CD4-positive, alpha-beta memory T cell (primary cell): ENCODE measurements at regions of chr14 and their contacts with region 1.

Region 1: GRCh38 chr14:106044949-106045600 is 518.7 kb downstream of the TMEM121 start:
- DNase-seq: peak; percentile 66 to 80 (median 69)
- H3K4me3 ChIP-seq: no peak overlapping the region
- H3K4me3 Mint-ChIP-seq: no peak overlapping the region
- H3K27ac ChIP-seq: no peak overlapping the region
- H3K27ac Mint-ChIP-seq: peak overlapping the region in 1 of 7 donors; percentile 45
- H3K4me1 ChIP-seq: no peaks in the 10 kb centered on the region
- H3K4me1 Mint-ChIP-seq: peaks cover 0 to 3% (median under 1%) of the 10 kb centered on the region in 4 donors
- H3K27me3 ChIP-seq: no peaks in the 10 kb centered on the region
- H3K27me3 Mint-ChIP-seq: peaks cover 4 to 17% of the 10 kb centered on the region in 2 donors

Region 2: DNA sequence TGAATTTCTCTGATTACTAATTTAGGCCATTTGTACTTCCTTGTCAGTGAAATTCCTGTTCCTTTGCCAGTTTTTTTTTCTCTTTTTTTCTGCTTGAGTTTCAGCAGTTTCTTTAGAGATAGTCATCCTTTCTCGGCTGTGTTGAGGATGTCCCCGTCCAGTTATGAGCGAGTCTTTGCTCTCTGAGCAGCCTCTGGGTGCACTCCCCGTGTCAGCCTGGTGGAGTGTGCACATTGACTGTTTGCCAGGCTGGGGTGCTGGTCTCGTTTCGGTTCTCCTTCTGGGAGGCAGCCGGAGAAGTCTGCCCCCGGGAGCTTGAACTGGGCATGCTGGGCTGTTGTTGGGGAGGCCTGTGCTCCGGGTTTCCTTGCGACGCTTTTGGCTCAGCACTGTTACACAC is 727.5 kb before region 1 on chr14:
- CTCF ChIA-PET with region 1: no interaction called
- POLR2A ChIA-PET with region 1: no interaction called
- intact Hi-C with region 1: no loop called
- DNase-seq: no peak
- H3K4me3 ChIP-seq: no peak overlapping the region
- H3K4me3 Mint-ChIP-seq: peak overlapping the region in 1 of 8 donors; percentile 50
- H3K27ac ChIP-seq: no peak overlapping the region
- H3K27ac Mint-ChIP-seq: peak overlapping the region in 3 of 7 donors; percentile 42 to 87 (median 64)
- H3K4me1 ChIP-seq: peaks cover 22% of the 10 kb centered on the region
- H3K4me1 Mint-ChIP-seq: peaks cover 9 to 32% (median 23%) of the 10 kb centered on the region in 4 donors
- H3K27me3 ChIP-seq: no peaks in the 10 kb centered on the region
- H3K27me3 Mint-ChIP-seq: no peaks in the 10 kb centered on the region

Region 3: GRCh38 chr14:106062502-106063272 is 17.6 kb after region 1 on chr14:
- CTCF ChIA-PET with region 1: interaction called, 4 read pairs
- POLR2A ChIA-PET with region 1: no interaction called
- intact Hi-C with region 1: loop called (anchors 2 kb)
- DNase-seq: no peak
- H3K4me3 ChIP-seq: no peak overlapping the region
- H3K4me3 Mint-ChIP-seq: peak overlapping the region in 1 of 8 donors; percentile 3
- H3K27ac ChIP-seq: no peak overlapping the region
- H3K27ac Mint-ChIP-seq: peak overlapping the region in 1 of 7 donors; percentile 40
- H3K4me1 ChIP-seq: peaks cover 11% of the 10 kb centered on the region
- H3K4me1 Mint-ChIP-seq: peaks cover 6 to 20% (median 15%) of the 10 kb centered on the region in 4 donors
- H3K27me3 ChIP-seq: no peaks in the 10 kb centered on the region
- H3K27me3 Mint-ChIP-seq: peaks cover 7 to 14% of the 10 kb centered on the region in 2 donors